SK-N-SH (cell line): ENCODE measurements at regions of chr1 and their contacts with region 1.

Region 1: DNA sequence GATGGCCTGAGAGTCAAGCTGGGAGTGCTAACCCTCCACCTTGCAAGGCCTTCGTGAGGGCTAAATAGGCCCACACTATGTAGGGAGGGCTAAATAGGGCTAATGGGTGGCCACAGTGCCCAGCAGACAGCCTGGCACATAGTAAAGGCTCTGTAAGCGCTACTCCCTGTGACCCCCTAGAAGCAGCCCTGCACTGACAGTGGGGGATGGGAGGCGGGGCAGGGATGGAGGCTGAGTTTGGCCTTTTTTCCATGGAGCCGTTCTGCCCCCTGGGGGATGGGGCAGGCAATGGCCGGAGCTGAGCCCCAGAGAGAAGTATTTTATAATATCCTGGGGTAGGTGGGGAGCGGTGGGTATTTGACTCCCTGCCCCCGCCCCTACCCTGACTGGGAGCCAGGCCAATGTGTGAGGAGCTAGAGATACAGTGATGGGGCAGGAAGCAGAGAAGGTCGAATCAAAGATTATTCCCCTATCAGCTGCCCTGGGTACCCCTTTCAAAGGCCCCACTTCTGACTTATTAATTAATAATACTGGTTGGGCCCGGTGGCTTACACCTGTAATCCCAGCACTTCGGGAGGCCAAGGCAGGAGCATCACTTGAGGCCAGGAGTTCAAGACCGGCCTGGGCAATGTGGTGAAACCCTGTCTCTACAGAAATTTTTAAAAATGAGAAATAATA is 42.3 kb downstream of the LACTBL1 start:
- DNase-seq: peak; percentile 89
- H3K4me3 ChIP-seq: no peak overlapping the region
- H3K27ac ChIP-seq: no peak overlapping the region
- H3K4me1 ChIP-seq: no peaks in the 10 kb centered on the region
- H3K27me3 ChIP-seq: no peaks in the 10 kb centered on the region; the same call in 1 of the 2 replicates
- CTCF ChIP-seq: peak; percentile 80
- EP300 ChIP-seq: no peak
- RAD21 ChIP-seq: peak; percentile 88

Region 2: DNA sequence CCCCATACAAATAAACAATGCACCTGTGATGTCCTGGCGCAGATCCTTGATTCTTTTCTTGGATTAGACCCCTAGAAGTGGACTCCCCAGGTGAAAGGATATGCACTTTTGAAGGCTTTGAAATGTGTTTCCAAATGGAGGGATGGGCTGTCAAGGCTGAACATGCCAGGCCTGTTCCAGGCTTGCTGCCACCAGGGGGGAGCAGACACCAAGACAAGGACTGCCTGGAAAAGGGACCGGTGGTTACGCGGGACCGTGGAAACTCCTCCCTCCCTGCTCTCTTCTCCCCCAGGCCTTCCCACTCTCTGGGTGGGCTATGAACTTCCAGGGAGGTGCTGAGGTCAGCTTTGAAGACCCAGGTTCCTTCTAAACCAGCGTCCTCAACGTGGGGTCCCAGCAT is 264.6 kb before region 1 on chr1:
- CTCF ChIA-PET with region 1: interaction called, 50 read pairs
- POLR2A ChIA-PET with region 1: no interaction called
- DNase-seq: peak; percentile 77
- H3K4me3 ChIP-seq: no peak overlapping the region; a peak in 1 of 4 replicates
- H3K27ac ChIP-seq: no peak overlapping the region
- H3K4me1 ChIP-seq: no peaks in the 10 kb centered on the region
- H3K27me3 ChIP-seq: peaks cover 20% of the 10 kb centered on the region; the same call in 1 of the 2 replicates
- CTCF ChIP-seq: peak; percentile 69
- EP300 ChIP-seq: no peak
- RAD21 ChIP-seq: peak; percentile 87

Region 3: DNA sequence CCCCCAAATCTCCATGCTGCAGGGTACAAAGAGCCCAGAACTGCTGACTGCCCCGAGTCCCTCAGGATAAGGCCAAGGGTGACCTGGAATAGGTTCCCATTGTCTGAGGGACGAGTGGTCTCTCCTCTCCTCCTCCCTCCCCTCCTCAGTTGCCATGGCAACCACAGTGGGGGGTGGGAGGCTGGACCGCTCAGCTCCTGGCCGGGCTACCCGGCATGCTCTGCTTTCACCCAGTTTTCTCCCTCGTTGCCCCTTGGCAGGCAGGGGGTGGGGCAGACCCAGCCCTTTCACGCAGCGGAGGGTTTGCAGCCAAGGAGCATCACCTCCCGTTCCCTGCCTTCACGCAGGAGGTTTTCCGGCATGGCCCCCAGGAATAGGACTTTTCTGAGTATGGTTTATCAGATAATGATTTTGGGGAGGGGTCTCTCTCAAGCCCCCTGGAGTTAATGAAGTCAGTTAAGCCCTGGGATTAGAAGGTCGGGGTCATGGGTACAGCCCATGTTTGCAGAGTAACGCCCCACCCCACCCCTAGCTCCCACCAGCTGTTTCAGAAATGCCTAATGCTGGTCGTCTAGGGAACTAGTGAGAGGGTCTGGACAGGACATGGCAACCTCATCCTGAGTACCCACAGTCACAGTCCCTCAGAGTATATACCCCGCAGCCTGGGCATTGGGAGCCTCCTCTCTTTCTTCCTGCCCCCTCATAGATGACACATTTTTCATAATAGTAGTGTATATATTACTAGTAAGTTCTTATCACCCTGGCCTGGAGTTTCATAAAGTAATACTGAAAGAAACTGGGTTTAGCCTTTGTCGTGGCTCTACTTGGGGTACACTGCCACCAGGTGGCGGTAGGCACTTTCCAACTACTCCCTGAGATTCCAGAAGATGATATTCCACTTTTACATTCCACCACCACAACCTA is 256.6 kb before region 1 on chr1:
- CTCF ChIA-PET with region 1: interaction called, 70 read pairs
- POLR2A ChIA-PET with region 1: no interaction called
- DNase-seq: peak; percentile 87
- H3K4me3 ChIP-seq: no peak overlapping the region; a peak in 1 of 4 replicates
- H3K27ac ChIP-seq: no peak overlapping the region
- H3K4me1 ChIP-seq: no peaks in the 10 kb centered on the region; a peak in 1 of 4 replicates
- H3K27me3 ChIP-seq: peaks cover 12% of the 10 kb centered on the region; the same call in 1 of the 2 replicates
- CTCF ChIP-seq: peak; percentile 95
- EP300 ChIP-seq: no peak
- RAD21 ChIP-seq: peak; percentile 94

Region 4: DNA sequence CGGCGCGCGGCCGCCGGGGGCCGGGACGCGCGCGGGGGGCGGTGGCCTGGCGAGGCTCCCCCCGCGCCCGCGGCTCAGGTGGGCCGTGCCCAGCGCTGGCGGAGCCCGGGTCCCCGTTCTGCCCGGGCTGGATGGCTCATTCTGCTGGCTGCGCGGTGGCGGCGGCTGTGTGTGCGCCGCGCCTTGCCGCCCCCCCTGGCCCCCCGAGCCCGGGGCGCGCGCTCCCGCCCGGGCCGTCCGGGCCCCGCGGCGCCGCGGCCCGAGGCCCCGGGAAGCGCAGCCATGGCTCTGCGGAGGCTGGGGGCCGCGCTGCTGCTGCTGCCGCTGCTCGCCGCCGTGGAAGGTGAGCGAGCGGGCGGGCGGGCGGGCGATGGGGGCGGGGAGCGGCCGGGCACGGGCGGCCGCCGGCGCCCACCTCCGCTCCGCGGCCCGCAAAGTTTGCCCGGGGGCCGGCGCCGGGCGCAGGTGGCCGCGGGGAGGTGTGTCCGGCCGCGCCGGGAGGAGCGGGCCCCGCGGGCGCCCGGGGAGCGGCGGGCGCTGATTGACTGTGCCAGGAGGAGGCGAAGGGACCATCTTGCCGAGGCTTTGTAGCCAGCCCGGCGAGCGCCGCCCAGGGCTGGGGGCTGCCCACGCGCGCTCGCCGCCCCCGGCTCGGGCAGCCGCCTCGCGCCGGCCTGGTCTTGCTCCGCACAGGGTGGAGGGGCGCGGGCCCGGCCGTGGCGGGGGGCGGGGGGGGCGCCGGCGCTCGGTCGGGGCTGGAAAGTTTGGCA is 219.5 kb before region 1 on chr1 and contains the start of gene EPHB2:
- CTCF ChIA-PET with region 1: interaction called, 41 read pairs
- POLR2A ChIA-PET with region 1: no interaction called
- DNase-seq: peak; percentile 96
- H3K4me3 ChIP-seq: peak within 1 kb of the TSS; percentile 69 to 73
- H3K27ac ChIP-seq: peak within 1 kb of the TSS in 1 of 2 experiments; percentile 91; a peak in 2 of 4 replicates
- H3K4me1 ChIP-seq: peaks cover 0 to 30% of the 10 kb centered on the region in 2 experiments; a peak in 1 of 4 replicates
- H3K27me3 ChIP-seq: no peaks in the 10 kb centered on the region
- CTCF ChIP-seq: no peak
- EP300 ChIP-seq: no peak
- RAD21 ChIP-seq: no peak
- polyA plus RNA-seq, gene EPHB2: 18.6 and 25.2 TPM in 2 replicates

Region 5: GRCh38 chr1:22814176-22815042 is 116.0 kb before region 1 on chr1:
- CTCF ChIA-PET with region 1: no interaction called
- POLR2A ChIA-PET with region 1: no interaction called
- DNase-seq: peak; percentile 73
- H3K4me3 ChIP-seq: no peak overlapping the region
- H3K27ac ChIP-seq: peak overlapping the region in 1 of 2 experiments; percentile 35; a peak in 1 of 4 replicates
- H3K4me1 ChIP-seq: peaks cover 5 to 60% of the 10 kb centered on the region in 2 experiments; a peak in 2 of 4 replicates
- H3K27me3 ChIP-seq: no peaks in the 10 kb centered on the region
- CTCF ChIP-seq: no peak
- EP300 ChIP-seq: no peak
- RAD21 ChIP-seq: peak; percentile 4; the same call in 1 of the 2 replicates

Region 6: DNA sequence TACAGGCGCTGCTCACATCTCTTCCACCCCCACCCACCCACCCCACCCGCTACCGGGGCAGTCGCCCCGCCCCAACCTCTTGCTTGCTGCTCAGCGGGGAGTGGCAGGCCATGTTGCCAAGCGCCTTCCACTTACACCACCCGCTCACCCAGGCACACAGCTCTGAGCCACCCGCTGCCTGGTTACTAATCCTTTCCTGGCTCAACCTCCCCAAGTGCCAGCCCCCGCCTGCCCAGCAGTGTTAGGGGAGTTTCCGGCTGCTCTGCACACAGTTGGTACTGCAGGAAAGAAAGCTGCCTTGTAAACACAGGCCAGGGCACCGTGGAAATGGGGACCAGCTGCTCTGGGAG is 13.9 kb before region 1 on chr1:
- CTCF ChIA-PET with region 1: interaction called, 26 read pairs
- POLR2A ChIA-PET with region 1: interaction called, 3 read pairs
- DNase-seq: no peak
- H3K4me3 ChIP-seq: no peak overlapping the region
- H3K27ac ChIP-seq: no peak overlapping the region
- H3K4me1 ChIP-seq: no peaks in the 10 kb centered on the region
- H3K27me3 ChIP-seq: no peaks in the 10 kb centered on the region
- CTCF ChIP-seq: no peak
- EP300 ChIP-seq: no peak
- RAD21 ChIP-seq: no peak

Region 7: GRCh38 chr1:22941257-22941656 is 10.9 kb after region 1 on chr1:
- CTCF ChIA-PET with region 1: interaction called, 11 read pairs
- POLR2A ChIA-PET with region 1: no interaction called
- DNase-seq: no peak
- H3K4me3 ChIP-seq: no peak overlapping the region
- H3K27ac ChIP-seq: no peak overlapping the region
- H3K4me1 ChIP-seq: no peaks in the 10 kb centered on the region
- H3K27me3 ChIP-seq: no peaks in the 10 kb centered on the region; the same call in 1 of the 2 replicates
- CTCF ChIP-seq: no peak
- EP300 ChIP-seq: no peak
- RAD21 ChIP-seq: no peak

Region 8: GRCh38 chr1:22963044-22963677 is 32.8 kb after region 1 on chr1:
- CTCF ChIA-PET with region 1: interaction called, 16 read pairs
- POLR2A ChIA-PET with region 1: no interaction called
- DNase-seq: no peak
- H3K4me3 ChIP-seq: no peak overlapping the region
- H3K27ac ChIP-seq: no peak overlapping the region
- H3K4me1 ChIP-seq: no peaks in the 10 kb centered on the region
- H3K27me3 ChIP-seq: no peaks in the 10 kb centered on the region
- CTCF ChIP-seq: no peak
- EP300 ChIP-seq: no peak
- RAD21 ChIP-seq: no peak